ENCODE measurements at regions of chr17 and their contacts with region 1.

Region 1: GRCh38 chr17:55294042-55294751 is 29.4 kb downstream of the HLF start:
- DNase-seq: no peak
- H3K4me3 ChIP-seq: no peak overlapping the region
- CTCF ChIP-seq: no peak

Region 2: DNA sequence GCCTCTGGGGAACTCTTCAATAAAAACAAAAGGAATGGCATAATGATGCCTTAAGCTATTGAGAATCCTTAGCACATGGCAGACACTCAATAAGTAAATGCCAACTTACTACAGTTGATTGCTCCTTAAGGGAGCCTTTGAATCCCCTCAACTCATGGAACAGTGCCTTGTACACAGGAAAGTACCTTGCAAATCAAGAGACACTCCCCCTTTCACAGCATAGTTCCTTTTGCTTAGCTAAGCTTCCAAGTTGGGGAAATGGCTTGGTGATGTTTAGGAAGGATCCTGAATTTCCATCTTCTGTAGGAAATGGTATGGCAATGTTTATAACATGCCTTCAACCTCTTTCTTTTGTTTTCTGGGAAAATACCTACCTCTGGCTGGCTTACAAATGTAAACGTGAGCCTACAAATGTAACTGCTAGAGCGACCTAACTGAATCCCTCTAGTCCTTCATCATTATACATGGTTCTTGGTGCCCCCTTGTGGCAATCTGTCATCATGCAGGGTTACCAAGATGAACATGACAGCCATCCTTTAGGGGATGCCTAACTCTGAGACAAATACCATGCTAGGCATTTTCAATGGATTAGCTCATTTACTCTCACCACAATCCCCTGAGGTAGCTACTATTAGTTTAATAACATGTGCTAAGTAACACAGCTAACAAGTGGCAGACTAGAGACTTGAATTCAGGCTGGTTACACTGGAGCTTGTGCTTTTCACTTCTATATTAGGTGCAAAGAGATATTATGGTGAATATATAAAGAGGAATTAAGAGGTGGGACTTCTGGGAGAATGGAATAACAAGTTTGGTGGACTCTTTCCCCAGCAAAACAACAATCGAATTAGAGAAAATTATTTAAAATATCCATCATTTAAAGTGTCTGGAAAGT is 62.5 kb after region 1 on chr17:
- in situ Hi-C with region 1: loop called (anchors 5 kb)
- DNase-seq: peak; percentile 43
- H3K4me3 ChIP-seq: no peak overlapping the region
- CTCF ChIP-seq: peak; percentile 82

Measured in astrocyte of the cerebellum (primary cell).